MCF 10A (cell line): ENCODE measurements at regions of chr2 and their contacts with region 1.

Region 1: GRCh38 chr2:148201075-148202004 is 180.4 kb downstream of the MBD5 start:
- DNase-seq: peak; percentile 51
- H3K4me3 Mint-ChIP-seq: no peak overlapping the region
- H3K27ac Mint-ChIP-seq: no peak overlapping the region
- H3K4me1 Mint-ChIP-seq: no peaks in the 10 kb centered on the region
- H3K27me3 Mint-ChIP-seq: no peaks in the 10 kb centered on the region
- CTCF ChIP-seq: peak; percentile 36

Region 2: DNA sequence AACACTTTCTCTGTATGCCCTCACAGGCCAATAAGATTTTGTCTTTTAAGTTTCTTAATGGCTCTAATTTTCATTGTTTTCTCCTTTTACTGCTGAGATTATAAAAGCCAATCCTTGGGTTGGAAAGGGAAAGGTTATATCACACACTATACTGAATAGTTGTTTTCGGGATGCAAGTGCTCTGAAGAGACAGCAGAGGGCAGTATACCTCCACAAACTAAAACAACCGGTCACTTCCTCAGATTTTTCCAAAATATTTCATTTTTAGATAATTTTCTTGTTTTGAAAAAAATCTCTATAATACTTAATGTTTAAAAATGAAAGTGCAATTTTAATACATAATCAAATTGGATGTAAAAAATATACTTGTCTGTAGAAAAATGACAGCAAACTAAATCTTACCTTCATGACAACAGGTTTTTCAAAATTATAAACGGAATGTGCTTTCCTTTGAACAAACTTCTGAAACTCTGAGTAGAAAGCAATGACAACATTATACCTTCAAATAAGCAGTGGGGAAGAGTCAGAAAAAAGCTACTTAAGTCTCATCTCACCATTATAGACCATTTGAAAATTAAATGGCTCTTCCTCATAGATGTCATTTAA is 263.5 kb before region 1 on chr2:
- CTCF ChIA-PET with region 1: no interaction called
- POLR2A ChIA-PET with region 1: no interaction called
- intact Hi-C with region 1: loop called (anchors 5 kb)
- DNase-seq: peak; percentile 48
- H3K4me3 Mint-ChIP-seq: no peak overlapping the region
- H3K27ac Mint-ChIP-seq: no peak overlapping the region
- H3K4me1 Mint-ChIP-seq: no peaks in the 10 kb centered on the region
- H3K27me3 Mint-ChIP-seq: no peaks in the 10 kb centered on the region
- CTCF ChIP-seq: peak; percentile 75

Region 3: DNA sequence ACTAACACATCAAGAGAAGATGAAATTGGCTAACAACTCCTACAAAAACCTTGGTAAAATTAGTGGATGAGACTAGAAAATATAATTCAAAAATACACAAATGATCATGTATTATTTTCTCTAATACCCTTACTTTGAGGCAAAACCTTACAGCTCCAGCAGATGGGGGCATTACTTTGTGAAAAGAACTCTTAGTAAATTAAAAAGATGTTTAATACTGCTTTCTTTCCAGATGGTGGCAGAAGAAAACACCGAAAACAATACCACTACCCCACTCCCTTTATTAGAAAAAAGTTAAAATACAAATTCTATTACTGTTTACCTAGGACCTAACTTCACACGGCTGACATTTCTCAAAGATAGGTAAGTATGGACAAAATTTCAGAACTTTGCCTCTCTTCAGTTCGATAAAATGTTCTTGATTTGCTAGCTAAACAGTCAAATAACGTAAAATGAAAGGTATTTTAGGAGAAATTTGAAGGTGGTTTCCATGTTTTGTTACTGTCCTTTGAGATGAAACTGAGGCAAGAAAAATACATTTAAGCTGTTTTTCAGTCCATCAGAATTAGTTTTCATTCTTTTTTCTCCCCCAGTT is 211.4 kb before region 1 on chr2:
- CTCF ChIA-PET with region 1: no interaction called
- POLR2A ChIA-PET with region 1: interaction called, 3 read pairs
- intact Hi-C with region 1: loop called (anchors 1 kb)
- DNase-seq: peak; percentile 50
- H3K4me3 Mint-ChIP-seq: no peak overlapping the region
- H3K27ac Mint-ChIP-seq: no peak overlapping the region
- H3K4me1 Mint-ChIP-seq: no peaks in the 10 kb centered on the region
- H3K27me3 Mint-ChIP-seq: no peaks in the 10 kb centered on the region
- CTCF ChIP-seq: peak; percentile 72